Posterior vena cava (tissue), 2 donors: ENCODE measurements at regions of chrX and their contacts with region 1.

Region 1: DNA sequence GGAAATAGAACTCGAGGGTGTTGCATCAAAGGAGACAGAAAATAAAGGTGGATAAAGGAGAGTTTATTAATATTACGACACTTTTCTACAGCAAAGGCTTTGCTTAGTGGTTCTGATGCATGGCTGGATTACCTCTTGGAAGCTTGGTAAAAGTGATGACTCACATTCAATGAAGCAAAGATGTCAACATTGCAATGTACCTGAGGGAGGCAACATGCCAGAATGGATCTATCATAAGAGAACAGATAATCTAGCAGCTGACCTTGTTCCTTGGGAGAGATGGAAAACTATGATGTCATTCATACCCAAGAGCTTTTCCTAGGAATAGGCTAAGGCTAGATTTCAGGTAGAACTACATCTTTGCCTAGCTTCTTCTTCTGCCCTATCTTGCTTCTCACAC is 735.0 kb upstream of the DIAPH2 start:
- DNase-seq: no peak

Region 2: DNA sequence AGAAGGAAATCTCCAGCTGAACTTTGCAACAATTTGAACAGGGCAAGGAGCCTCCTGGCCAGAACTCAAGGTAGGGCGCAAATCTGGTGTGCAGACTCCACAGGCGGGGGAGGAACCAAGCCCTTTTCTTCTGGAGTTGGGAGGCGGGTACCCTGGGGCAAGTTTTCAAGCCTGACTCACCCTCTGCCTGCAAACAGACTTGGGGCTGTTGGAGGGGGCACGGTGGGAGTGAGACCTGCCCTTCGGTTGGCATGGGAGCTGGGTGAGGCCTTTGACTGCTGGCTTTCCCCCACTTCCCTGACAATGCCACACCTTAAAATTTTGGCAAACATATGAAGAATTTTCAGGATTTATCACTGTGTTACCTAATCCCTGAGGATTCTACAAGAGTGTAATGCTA is 25.3 kb after region 1 on chrX:
- intact Hi-C with region 1: loop called in 1 of 2 experiments (anchors 1 kb)
- DNase-seq: no peak

Region 3: GRCh38 chrX:97039363-97040029 is 1089.9 kb after region 1 on chrX:
- intact Hi-C with region 1: no loop called
- DNase-seq: no peak